PC-9 (cell line): ENCODE measurements at regions of chr19 and their contacts with region 1.

Region 1: GRCh38 chr19:23554558-23554957 is 132.5 kb downstream of the ZNF675 start:
- DNase-seq: peak; percentile 51 to 96
- H3K4me3 ChIP-seq: no peak overlapping the region; the same call in 1 of the 2 replicates
- H3K27ac ChIP-seq: peak overlapping the region; percentile 90
- H3K4me1 ChIP-seq: peaks cover 55% of the 10 kb centered on the region
- H3K27me3 ChIP-seq: no peaks in the 10 kb centered on the region
- CTCF ChIP-seq: no peak

Region 2: GRCh38 chr19:23415561-23416191 is 138.9 kb before region 1 on chr19:
- CTCF ChIA-PET with region 1: no interaction called
- POLR2A ChIA-PET with region 1: no interaction called
- intact Hi-C with region 1: no loop called
- DNase-seq: peak in 1 of 2 experiments; percentile 20
- H3K4me3 ChIP-seq: no peak overlapping the region
- H3K27ac ChIP-seq: no peak overlapping the region
- H3K4me1 ChIP-seq: no peaks in the 10 kb centered on the region
- H3K27me3 ChIP-seq: no peaks in the 10 kb centered on the region
- CTCF ChIP-seq: no peak

Region 3: GRCh38 chr19:23509686-23510450 is 44.7 kb before region 1 on chr19:
- CTCF ChIA-PET with region 1: no interaction called
- POLR2A ChIA-PET with region 1: no interaction called
- intact Hi-C with region 1: loop called (anchors 1 kb)
- DNase-seq: peak; percentile 74 to 99
- H3K4me3 ChIP-seq: no peak overlapping the region
- H3K27ac ChIP-seq: peak overlapping the region; percentile 65
- H3K4me1 ChIP-seq: peaks cover 22% of the 10 kb centered on the region
- H3K27me3 ChIP-seq: no peaks in the 10 kb centered on the region
- CTCF ChIP-seq: no peak

Region 4: DNA sequence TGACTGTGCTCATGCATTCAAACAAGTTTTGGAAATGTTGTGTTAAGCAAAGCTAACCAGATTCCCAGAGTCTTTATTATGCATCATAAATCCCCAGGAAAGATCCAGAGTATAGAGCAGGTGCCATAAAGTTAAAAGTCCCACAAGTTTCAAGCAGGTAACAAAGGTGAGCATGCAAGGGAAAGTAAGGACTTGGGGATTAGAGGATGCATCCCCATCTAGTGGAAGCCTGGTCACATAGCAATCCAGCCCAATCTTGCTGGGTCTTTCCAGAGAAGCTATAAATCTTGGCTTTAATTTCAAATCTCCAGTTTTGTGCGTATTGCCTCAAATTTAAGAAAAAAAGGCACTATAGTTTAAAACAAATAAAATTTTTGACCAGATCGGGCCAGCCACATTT is 605.1 kb after region 1 on chr19:
- CTCF ChIA-PET with region 1: no interaction called
- POLR2A ChIA-PET with region 1: no interaction called
- intact Hi-C with region 1: no loop called
- DNase-seq: peak; percentile 3 to 43
- H3K4me3 ChIP-seq: no peak overlapping the region
- H3K27ac ChIP-seq: no peak overlapping the region
- H3K4me1 ChIP-seq: no peaks in the 10 kb centered on the region
- H3K27me3 ChIP-seq: no peaks in the 10 kb centered on the region
- CTCF ChIP-seq: peak; percentile 71